ENCODE measurements at regions of chr1 and their contacts with region 1.

Region 1: DNA sequence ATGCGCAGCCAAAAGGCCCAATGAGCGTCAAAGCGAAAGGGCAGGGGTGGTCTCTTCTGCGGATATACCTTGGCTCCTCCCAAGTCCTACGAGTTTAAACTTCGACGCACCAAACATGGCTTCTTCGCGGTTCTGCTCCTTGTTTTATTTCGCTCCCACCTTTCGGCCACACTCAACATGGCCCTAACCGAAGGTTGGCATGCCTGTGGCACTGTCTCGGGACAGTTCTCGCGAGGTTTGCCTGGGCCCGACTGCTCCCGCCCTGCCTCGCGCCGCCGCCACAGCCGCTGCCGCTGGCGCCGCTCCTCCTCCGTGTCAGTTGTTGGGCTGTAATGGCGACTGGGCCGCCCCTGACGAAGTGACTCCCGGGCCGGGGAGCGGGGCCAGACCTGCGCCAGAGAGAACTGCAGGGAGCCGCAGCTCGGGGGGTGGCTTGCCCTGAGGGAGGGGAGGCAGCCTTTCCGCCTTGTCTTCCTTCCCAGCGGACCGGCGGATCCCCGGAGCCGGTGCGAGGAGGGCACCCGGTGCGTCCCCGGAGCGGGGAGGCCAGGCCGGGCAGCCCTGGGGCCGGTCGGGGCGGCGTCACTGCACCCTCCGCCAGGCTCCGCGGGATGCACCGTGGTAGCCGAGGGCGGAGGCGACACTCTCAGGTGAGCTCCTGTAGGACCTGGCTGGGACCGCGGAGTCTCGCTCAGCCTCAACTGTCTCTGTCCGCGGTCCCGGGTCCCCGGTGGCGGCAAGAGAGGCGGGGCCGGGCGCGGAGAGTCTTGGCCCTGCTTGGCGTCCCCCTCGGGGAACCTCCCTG is at the start of gene CEP350:
- DNase-seq: peak; percentile 99
- H3K4me3 ChIP-seq: peak within 1 kb of the TSS; percentile 93
- H3K27ac ChIP-seq: peak within 1 kb of the TSS; percentile 88
- H3K4me1 ChIP-seq: peaks cover 46% of the 10 kb centered on the region
- CTCF ChIP-seq: 0 out of 2 replicates have a peak, but pooled peaks have one; percentile 6
- total RNA-seq, gene CEP350: 48.6 and 51.9 TPM in 2 replicates

Region 2: GRCh38 chr1:179034720-179035119 is 920.0 kb before region 1 on chr1:
- CTCF ChIA-PET with region 1: no interaction called
- POLR2A ChIA-PET with region 1: no interaction called
- intact Hi-C with region 1: loop called (anchors 10 kb)
- DNase-seq: peak; percentile 69
- H3K4me3 ChIP-seq: peak overlapping the region; percentile 57
- H3K27ac ChIP-seq: peak overlapping the region; percentile 82
- H3K4me1 ChIP-seq: peaks cover 98% of the 10 kb centered on the region
- CTCF ChIP-seq: no peak

Region 3: GRCh38 chr1:179882243-179883039 is 72.3 kb before region 1 on chr1 and contains the start of gene TOR1AIP1:
- CTCF ChIA-PET with region 1: no interaction called
- POLR2A ChIA-PET with region 1: interaction called, 9 read pairs
- intact Hi-C with region 1: loop called (anchors 1 kb)
- DNase-seq: peak; percentile 99
- H3K4me3 ChIP-seq: peak within 1 kb of the TSS; percentile 79
- H3K27ac ChIP-seq: peak within 1 kb of the TSS; percentile 96
- H3K4me1 ChIP-seq: peaks cover 29% of the 10 kb centered on the region
- CTCF ChIP-seq: peak; percentile 58
- total RNA-seq, gene TOR1AIP1: 11.0 and 12.1 TPM in 2 replicates

Region 4: GRCh38 chr1:179938752-179939151 is 15.9 kb before region 1 on chr1:
- CTCF ChIA-PET with region 1: no interaction called
- POLR2A ChIA-PET with region 1: interaction called, 11 read pairs
- intact Hi-C with region 1: no loop called
- DNase-seq: no peak
- H3K4me3 ChIP-seq: no peak overlapping the region
- H3K27ac ChIP-seq: no peak overlapping the region
- H3K4me1 ChIP-seq: no peaks in the 10 kb centered on the region
- CTCF ChIP-seq: no peak

Region 5: DNA sequence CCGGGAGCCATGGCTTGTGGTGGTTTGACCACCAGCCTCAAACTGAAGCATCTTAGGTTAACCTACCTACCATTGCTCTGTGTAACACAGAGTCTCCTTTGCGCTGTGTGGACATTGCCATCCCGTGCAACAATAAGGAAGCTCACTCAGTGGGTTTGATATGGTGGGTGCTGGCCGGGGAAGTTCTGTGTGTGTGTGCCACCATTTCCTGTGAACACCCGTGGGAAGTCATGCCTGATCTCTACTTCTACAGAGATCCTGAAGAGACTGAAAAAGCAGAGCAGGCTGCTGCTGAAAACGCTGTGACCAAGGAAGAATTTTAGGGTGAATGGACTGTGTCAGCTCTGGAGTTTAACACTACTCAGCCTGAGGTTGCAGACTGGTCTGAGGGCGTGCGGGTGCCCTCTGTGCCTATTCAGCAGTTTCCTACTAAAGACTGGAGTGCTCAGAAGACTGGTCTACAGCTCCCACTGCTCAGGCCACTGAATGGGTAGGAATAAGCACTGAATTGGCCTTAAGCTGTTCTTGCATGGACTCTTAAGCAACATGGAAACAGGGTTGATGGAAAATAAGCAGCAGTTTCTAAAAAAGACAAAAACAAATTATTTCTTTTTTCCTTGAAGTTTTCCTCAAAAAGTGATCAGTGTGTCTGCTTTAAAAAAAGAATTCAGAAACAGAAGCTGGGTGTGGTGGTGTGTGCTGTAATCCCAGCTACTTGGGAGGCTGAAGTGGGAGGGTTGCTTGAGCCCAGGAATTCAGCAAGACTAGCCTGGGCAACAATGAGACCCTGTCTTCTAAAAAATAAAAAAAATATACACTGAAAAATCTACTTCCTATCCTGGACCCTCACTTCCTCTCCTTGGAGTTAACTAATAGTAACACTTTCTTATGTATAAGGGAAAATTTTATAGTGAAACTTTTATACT is 14.6 kb after region 1 on chr1:
- CTCF ChIA-PET with region 1: no interaction called
- POLR2A ChIA-PET with region 1: interaction called, 11 read pairs
- intact Hi-C with region 1: no loop called
- DNase-seq: no peak
- H3K4me3 ChIP-seq: no peak overlapping the region
- H3K27ac ChIP-seq: no peak overlapping the region
- H3K4me1 ChIP-seq: no peaks in the 10 kb centered on the region
- CTCF ChIP-seq: no peak

Region 6: DNA sequence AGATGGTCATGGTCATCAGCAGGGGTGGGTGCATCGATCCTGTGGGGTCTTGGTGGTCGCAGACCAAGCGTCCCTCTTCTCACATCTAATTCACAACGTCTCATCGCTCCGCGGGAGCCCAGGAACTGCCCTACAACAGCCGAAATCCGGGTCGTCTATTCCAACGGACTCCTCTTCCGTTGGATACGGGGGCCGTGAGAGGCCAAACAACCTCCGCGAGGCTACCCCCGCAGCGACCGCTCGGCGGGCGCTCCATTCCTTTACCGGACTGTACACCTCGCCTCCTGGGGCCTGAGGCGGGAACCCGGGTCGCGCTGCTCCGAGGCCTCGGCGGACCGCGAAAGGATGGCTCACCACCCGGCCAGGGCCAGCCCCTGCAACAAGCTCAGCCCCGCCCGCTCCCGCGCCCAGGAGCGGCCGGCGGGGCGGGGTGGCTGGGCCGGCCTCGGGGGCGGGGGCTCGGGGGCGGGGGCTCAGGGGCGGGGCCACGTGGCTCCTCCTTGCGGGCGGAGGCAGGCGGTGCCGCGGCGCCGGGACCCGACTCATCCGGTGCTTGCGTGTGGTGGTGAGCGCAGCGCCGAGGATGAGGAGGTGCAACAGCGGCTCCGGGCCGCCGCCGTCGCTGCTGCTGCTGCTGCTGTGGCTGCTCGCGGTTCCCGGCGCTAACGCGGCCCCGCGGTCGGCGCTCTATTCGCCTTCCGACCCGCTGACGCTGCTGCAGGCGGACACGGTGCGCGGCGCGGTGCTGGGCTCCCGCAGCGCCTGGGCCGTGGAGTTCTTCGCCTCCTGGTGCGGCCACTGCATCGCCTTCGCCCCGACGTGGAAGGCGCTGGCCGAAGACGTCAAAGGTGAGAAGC is 199.9 kb after region 1 on chr1 and contains the start of gene QSOX1:
- CTCF ChIA-PET with region 1: no interaction called
- POLR2A ChIA-PET with region 1: no interaction called
- intact Hi-C with region 1: loop called (anchors 10 kb)
- DNase-seq: peak; percentile 92
- H3K4me3 ChIP-seq: peak within 1 kb of the TSS; percentile 89
- H3K27ac ChIP-seq: peak within 1 kb of the TSS; percentile 33
- H3K4me1 ChIP-seq: peaks cover 22% of the 10 kb centered on the region
- CTCF ChIP-seq: no peak
- total RNA-seq, gene QSOX1: 8.4 and 9.8 TPM in 2 replicates

Measured in OCI-LY7 (cell line).